Activated naive CD4-positive, alpha-beta T cell treated with anti-CD3 and anti-CD28 coated beads, Interleukin-2, amount 10 ng/mL, durations not matched to agents 7 days and 5 days (primary cell): ENCODE measurements at regions of chr16 and their contacts with region 1.

Region 1: DNA sequence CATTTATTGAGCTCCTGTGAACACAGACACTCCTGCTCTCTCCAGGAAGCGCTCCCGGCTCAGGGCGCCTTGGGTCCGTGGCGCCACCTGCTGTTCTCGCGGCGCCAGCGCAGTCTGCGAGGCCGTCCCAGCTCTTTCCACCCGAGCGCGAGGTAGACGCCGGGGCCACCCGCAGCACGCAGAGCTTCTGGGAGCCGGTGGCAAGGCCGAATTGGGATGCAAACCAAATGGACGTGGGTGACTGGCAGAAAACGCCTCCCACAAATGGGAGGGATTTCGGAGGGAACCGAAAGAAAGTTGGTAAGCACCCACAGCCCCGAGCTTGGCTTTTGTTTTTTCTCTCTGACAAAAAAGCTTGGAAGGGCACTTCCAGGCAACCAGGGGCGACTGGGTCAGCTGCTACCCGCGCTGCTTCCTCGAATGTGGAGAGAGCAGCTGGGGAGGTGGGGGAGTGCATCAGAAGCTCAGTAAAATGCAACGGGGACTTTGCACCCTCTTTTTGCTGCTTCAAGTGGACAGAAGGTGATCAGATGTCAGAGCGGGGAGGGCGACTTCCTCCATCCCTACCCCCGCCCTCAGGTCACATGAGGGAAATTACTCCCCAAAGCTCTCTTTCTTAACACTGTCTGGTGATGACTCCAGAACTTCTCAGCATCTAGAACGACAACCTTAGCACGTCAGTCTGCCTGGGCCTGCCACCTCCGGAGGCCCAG is 13.5 kb upstream of the N4BP1 start:
- DNase-seq: peak; percentile 85
- H3K4me3 Mint-ChIP-seq: peak overlapping the region; percentile 72
- H3K27ac Mint-ChIP-seq: peak overlapping the region; percentile 64
- H3K4me1 Mint-ChIP-seq: peaks cover 54% of the 10 kb centered on the region
- H3K27me3 Mint-ChIP-seq: peaks cover 16% of the 10 kb centered on the region

Region 2: GRCh38 chr16:48276102-48276501 is 347.4 kb before region 1 on chr16:
- CTCF ChIA-PET with region 1: no interaction called
- DNase-seq: no peak
- H3K4me3 Mint-ChIP-seq: no peak overlapping the region
- H3K27ac Mint-ChIP-seq: no peak overlapping the region
- H3K4me1 Mint-ChIP-seq: no peaks in the 10 kb centered on the region
- H3K27me3 Mint-ChIP-seq: no peaks in the 10 kb centered on the region

Region 3: DNA sequence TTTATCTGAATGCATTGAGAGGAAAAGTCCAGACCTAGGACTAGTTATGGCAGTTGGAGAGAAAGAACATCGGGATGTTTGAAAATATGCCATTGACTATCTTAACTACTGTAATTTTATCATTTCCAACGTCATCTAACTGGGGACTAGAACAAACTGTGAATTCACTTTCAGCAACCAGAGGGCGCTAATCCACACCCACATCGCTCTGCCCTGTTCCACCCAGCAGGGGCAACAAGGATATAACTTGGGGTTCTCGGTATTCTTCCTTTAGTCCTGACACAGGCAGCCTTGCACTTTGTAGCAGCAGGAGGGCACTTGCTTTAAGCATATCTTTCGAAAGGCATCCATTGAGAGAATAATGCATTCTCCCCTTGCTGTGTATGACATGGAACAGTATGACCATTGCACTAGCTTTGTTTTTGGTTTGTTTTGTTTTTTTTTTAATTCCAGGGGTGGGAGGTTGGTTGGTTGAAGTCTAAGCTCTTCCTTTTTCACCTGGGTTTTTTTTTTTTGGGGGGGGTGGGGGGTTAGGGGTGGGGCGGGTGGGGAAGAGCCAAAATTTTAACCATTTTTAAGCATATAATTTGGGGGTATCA is 269.8 kb before region 1 on chr16:
- CTCF ChIA-PET with region 1: interaction called, 70 read pairs
- DNase-seq: peak; percentile 78
- H3K4me3 Mint-ChIP-seq: no peak overlapping the region
- H3K27ac Mint-ChIP-seq: peak overlapping the region; percentile 55
- H3K4me1 Mint-ChIP-seq: peaks cover 15% of the 10 kb centered on the region
- H3K27me3 Mint-ChIP-seq: no peaks in the 10 kb centered on the region

Region 4: GRCh38 chr16:48542020-48542473 is 81.4 kb before region 1 on chr16:
- CTCF ChIA-PET with region 1: interaction called, 33 read pairs
- DNase-seq: peak; percentile 44
- H3K4me3 Mint-ChIP-seq: no peak overlapping the region
- H3K27ac Mint-ChIP-seq: no peak overlapping the region
- H3K4me1 Mint-ChIP-seq: peaks cover 8% of the 10 kb centered on the region
- H3K27me3 Mint-ChIP-seq: no peaks in the 10 kb centered on the region

Region 5: DNA sequence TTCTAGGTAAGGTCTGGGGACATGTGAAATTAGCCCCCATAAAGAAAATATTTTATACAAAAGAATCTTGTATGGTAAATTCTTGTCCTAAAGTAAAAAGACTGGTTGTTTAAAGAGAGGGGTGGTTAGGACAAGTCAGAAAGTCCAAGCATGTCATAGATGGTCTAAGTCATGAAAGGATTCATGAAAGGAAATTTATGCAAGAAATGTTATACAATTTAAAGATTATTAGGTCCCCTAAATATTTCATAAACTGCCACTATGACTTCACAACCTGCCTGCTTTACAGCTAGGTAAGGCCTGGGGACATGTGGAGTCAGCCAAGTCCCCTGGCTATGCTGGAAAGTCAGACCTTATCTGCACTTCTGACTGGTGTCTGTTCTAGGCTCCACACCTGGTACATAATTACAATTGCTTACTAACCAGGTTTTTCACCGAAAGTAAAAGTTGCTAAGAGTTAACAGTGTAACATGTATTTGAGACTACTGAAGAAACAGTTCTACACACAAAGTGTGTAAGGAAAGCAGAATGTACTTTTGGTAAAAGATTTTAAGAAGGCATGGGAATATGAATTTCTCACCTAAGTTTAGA is 30.5 kb before region 1 on chr16:
- CTCF ChIA-PET with region 1: no interaction called
- DNase-seq: no peak
- H3K4me3 Mint-ChIP-seq: no peak overlapping the region
- H3K27ac Mint-ChIP-seq: no peak overlapping the region
- H3K4me1 Mint-ChIP-seq: peaks cover 27% of the 10 kb centered on the region
- H3K27me3 Mint-ChIP-seq: no peaks in the 10 kb centered on the region

Region 6: DNA sequence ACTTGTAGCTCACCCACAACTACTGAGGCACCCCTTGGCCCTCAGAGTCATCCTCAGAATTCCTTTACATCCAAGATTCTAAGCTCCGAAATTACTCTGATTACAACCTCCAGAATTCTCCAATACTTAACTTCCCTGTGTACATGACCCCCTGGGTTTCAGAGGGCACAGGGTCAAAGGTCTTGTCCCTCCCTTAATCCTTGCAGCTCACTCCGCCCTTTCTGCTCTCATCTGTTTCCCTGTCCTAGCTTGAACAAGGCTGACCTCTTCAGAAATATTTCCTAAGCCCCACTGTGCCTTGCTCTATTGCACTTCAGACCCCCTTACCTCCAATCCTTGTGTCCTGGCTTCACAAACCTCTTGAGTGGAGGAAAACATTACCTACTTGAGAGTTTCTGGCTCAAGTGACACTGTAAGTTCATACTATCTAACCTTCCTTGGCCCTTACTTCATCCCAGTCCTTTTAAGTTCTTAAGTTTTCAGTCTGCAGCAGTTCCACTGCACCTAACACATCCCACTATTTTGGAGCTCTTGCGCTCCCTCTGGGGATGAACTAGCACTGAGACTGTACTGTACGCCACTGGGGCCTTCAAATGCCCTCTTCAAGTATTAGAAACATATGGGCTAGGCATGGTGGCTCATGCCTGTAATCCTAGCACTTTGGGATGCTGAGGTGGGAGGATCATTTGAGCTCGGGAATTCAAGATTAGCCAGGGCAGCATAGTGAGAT is 19.6 kb before region 1 on chr16:
- CTCF ChIA-PET with region 1: interaction called, 15 read pairs
- DNase-seq: no peak
- H3K4me3 Mint-ChIP-seq: no peak overlapping the region
- H3K27ac Mint-ChIP-seq: no peak overlapping the region
- H3K4me1 Mint-ChIP-seq: peaks cover 25% of the 10 kb centered on the region
- H3K27me3 Mint-ChIP-seq: no peaks in the 10 kb centered on the region